Transverse colon (tissue), 4 donors: ENCODE measurements at regions of chr6 and their contacts with region 1.

Region 1: GRCh38 chr6:149028767-149029405 is 282.1 kb downstream of the UST start:
- DNase-seq: peak; percentile 64
- H3K4me3 ChIP-seq: no peak overlapping the region
- H3K27ac ChIP-seq: no peak overlapping the region
- H3K4me1 ChIP-seq: peaks cover 0 to 13% (median 9%) of the 10 kb centered on the region in 4 donors
- H3K27me3 ChIP-seq: no peaks in the 10 kb centered on the region
- CTCF ChIP-seq: peak; percentile 71 to 91 (median 76)
- EP300 ChIP-seq: no peak
- POLR2A ChIP-seq: no peak

Region 2: DNA sequence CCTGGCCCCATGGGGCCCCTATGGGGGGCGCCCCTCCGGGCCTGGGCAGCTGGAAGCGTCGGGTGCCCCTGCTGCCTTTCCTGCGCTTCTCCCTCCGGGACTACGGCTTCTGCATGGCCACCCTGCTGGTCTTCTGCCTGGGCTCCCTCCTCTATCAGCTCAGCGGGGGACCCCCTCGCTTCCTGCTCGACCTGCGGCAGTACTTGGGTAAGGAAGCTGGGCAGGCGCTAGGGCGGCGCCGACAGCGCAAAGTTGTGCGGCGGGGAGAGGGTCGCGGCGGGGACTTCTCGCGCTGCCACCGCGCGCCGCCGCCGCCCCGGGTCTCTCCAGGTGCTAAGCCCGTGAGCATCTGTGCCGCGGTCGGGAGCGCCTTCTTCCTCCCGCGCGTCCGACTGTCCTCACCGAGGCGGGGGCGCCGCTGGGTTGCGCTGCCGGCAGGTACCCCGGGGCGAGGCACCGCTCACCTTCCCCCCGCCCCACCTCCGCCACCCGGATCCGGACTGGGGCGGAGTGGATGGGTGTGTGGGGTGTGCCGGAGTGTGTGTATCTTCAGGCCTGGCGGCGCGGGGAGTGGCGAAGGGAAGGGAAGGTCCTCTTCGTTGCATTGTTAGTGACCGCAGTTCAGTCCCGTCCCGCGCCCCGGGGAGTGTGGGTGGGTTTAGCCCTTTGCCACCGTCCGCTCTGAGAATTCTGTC is 281.3 kb before region 1 on chr6:
- in situ Hi-C with region 1: no loop called
- intact Hi-C with region 1: no loop called
- DNase-seq: peak; percentile 53
- H3K4me3 ChIP-seq: peak overlapping the region; percentile 46 to 95 (median 62)
- H3K27ac ChIP-seq: peak overlapping the region; percentile 81 to 88 (median 86)
- H3K4me1 ChIP-seq: peaks cover 3 to 22% (median 19%) of the 10 kb centered on the region in 4 donors
- H3K27me3 ChIP-seq: peaks cover 40% of the 10 kb centered on the region
- CTCF ChIP-seq: no peak
- EP300 ChIP-seq: no peak
- POLR2A ChIP-seq: no peak

Region 3: GRCh38 chr6:149082286-149082707 is 53.4 kb after region 1 on chr6:
- in situ Hi-C with region 1: loop called in 2 of 4 experiments (anchors 10 kb)
- intact Hi-C with region 1: no loop called
- DNase-seq: peak; percentile 87
- H3K4me3 ChIP-seq: no peak overlapping the region
- H3K27ac ChIP-seq: no peak overlapping the region
- H3K4me1 ChIP-seq: peaks cover 4 to 25% (median 8%) of the 10 kb centered on the region in 4 donors
- H3K27me3 ChIP-seq: no peaks in the 10 kb centered on the region
- CTCF ChIP-seq: peak; percentile 76 to 82 (median 80)
- EP300 ChIP-seq: no peak
- POLR2A ChIP-seq: no peak

Region 4: DNA sequence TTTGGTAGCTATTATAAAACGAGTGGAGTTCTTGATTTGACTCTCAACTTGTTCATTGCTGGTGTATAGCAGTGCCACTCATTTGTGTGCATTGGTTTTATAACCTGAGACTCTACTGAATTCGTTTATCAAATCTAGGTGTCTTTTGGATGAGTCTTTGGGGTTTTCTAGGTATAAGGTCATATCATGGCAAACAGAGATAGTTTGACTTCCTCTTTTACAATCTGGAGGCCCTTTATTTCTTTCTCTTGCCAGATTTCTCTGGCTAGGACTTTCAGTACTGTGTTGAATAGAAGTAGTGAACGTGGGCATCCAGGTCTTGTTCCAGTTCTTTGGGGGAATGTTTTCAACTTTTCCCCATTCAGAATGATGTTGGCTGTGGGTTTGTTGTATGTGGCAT is 410.0 kb after region 1 on chr6:
- in situ Hi-C with region 1: loop called in 2 of 4 experiments (anchors 5 kb)
- intact Hi-C with region 1: loop called (anchors 5 kb)
- DNase-seq: no peak
- H3K4me3 ChIP-seq: no peak overlapping the region
- H3K27ac ChIP-seq: no peak overlapping the region
- H3K4me1 ChIP-seq: peaks cover 0 to 15% (median 2%) of the 10 kb centered on the region in 4 donors
- H3K27me3 ChIP-seq: no peaks in the 10 kb centered on the region
- CTCF ChIP-seq: no peak
- EP300 ChIP-seq: no peak
- POLR2A ChIP-seq: no peak